Activated naive CD8-positive, alpha-beta T cell treated with anti-CD3 and anti-CD28 coated beads, Interleukin-2, amount 10 ng/mL, durations not matched to agents 7 days and 5 days (primary cell): ENCODE measurements at regions of chr15 and their contacts with region 1.

Region 1: DNA sequence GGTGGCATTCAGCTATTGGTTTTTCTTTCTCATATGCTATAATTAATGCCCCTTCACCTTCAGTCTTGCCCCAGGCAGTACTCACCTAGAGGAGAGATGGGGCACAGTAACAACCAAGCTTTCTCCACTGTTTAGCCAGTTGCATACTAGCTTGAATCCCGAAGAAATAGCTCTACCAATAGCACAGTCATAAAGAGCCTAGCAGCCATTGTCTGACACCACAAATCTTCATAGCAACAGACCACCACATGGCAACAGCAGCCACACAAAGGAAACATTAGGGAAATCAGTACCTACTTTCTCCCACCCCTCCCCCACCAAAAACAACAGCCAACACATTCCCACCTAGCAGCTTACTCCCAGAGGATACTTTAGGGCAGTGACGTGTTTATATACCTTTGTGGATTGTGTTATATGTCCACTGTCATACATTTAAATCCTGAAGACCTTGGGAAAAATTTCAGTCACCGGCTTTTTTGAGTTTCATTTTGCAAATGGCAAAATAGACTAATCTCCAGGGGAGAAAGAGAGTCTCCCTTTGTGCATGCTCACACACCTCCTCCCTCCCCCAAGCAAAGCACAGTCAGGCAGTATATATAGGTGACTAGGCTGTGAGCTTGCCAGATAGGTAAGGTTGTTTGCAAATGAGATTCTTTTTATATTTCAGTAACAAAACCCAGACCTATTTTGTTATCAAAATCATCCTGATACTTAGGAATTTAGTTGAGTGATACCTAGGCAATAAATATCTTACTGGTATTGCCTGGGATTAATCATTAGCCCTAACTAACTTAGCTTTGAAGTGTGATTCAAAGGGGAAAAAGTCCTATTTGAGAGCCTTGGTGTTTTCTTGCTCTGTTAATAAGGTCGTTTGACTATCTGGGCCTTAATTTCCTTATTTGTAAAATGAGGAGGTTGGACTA is 140.6 kb downstream of the RBPMS2 start:
- DNase-seq: peak; percentile 55
- ATAC-seq: peak; percentile 61
- H3K4me3 Mint-ChIP-seq: peak overlapping the region; percentile 62
- H3K27ac Mint-ChIP-seq: peak overlapping the region; percentile 80
- H3K4me1 Mint-ChIP-seq: peaks cover 52% of the 10 kb centered on the region
- H3K27me3 Mint-ChIP-seq: no peaks in the 10 kb centered on the region

Region 2: GRCh38 chr15:64622410-64623260 is 12.2 kb before region 1 on chr15:
- POLR2A ChIA-PET with region 1: interaction called, 33 read pairs
- DNase-seq: peak; percentile 71
- ATAC-seq: peak; percentile 73
- H3K4me3 Mint-ChIP-seq: peak overlapping the region; percentile 78
- H3K27ac Mint-ChIP-seq: peak overlapping the region; percentile 99
- H3K4me1 Mint-ChIP-seq: peaks cover 79% of the 10 kb centered on the region
- H3K27me3 Mint-ChIP-seq: no peaks in the 10 kb centered on the region

Region 3: GRCh38 chr15:64651573-64652260 is 16.9 kb after region 1 on chr15:
- POLR2A ChIA-PET with region 1: interaction called, 19 read pairs
- DNase-seq: no peak
- ATAC-seq: peak; percentile 92
- H3K4me3 Mint-ChIP-seq: peak overlapping the region; percentile 66
- H3K27ac Mint-ChIP-seq: peak overlapping the region; percentile 74
- H3K4me1 Mint-ChIP-seq: peaks cover 24% of the 10 kb centered on the region
- H3K27me3 Mint-ChIP-seq: no peaks in the 10 kb centered on the region